H1 (cell line): ENCODE measurements at regions of chr15 and their contacts with region 1.

Region 1: GRCh38 chr15:74695597-74696397 is at the start of gene EDC3:
- DNase-seq: peak; percentile 33 to 95
- H3K4me3 ChIP-seq: peak within 1 kb of the TSS; percentile 82 to 97 (median 92)
- H3K27ac ChIP-seq: peak within 1 kb of the TSS; percentile 76
- H3K4me1 ChIP-seq: peaks cover 0 to 5% (median 3%) of the 10 kb centered on the region in 4 experiments; a peak in 4 of 7 replicates
- H3K27me3 ChIP-seq: no peaks in the 10 kb centered on the region; a peak in 3 of 7 replicates
- CTCF ChIP-seq: 0 out of 4 replicates have a peak, but pooled peaks of 1 of the 3 experiments have one; percentile 8
- EP300 ChIP-seq: 0 out of 3 replicates have a peak, but pooled peaks of 1 of the 2 experiments have one; percentile 20
- POLR2A ChIP-seq: peak in 1 of 2 experiments; percentile 85; a peak in 2 of 3 replicates
- RAD21 ChIP-seq: no peak
- total RNA-seq, gene EDC3: 49.1 and 50.8 TPM in 2 replicates

Region 2: GRCh38 chr15:74723754-74724334 is 28.0 kb after region 1 on chr15:
- CTCF ChIA-PET with region 1: interaction called, 3 read pairs
- POLR2A ChIA-PET with region 1: interaction called, 12 read pairs
- DNase-seq: peak in 1 of 2 experiments; percentile 49
- H3K4me3 ChIP-seq: no peak overlapping the region
- H3K27ac ChIP-seq: no peak overlapping the region
- H3K4me1 ChIP-seq: peaks cover 0 to 5% (median 0%) of the 10 kb centered on the region in 4 experiments; a peak in 3 of 7 replicates
- H3K27me3 ChIP-seq: peaks cover 11 to 31% (median 26%) of the 10 kb centered on the region in 4 experiments
- CTCF ChIP-seq: no peak
- EP300 ChIP-seq: no peak
- POLR2A ChIP-seq: no peak
- RAD21 ChIP-seq: no peak

Region 3: DNA sequence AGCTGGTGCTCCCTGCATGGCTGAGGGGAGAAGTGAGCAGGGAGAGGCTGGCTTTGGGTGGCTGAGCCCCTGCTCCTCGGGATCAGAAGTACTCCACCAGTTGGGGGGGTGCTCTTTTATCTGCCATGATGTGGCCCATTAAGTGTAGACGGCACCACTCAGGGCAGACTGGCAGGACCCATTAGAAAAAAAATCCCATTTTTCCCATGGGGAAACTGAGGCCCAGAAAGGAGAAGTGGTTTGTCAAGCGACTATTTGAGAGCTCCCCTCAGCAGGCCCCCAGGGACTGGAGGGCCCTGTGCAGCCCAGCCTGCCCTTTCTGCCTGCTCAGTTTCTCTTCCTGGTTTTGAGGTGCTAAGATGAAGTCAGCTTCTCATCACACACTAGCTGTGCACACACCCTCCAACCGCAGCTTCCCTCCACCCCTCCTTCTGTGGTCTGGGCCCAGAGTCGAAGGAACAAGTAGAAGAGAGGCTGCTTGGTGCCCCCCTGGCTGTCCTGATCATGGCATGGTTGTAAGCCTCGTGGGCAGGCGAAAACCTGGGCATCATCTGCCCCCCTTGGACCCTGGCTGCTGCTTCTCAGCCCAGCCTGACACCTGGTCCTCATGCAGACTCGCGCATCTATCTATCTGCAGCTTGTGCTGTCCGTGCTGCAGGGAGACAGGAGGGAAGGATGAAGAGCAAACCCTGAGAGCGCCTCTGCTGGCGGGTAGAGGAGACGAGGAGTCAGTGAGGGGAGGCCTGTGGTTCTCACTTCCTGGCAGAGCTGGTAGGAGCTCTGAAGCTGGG is 91.6 kb after region 1 on chr15:
- CTCF ChIA-PET with region 1: no interaction called
- POLR2A ChIA-PET with region 1: no interaction called
- DNase-seq: peak in 1 of 2 experiments; percentile 71
- H3K4me3 ChIP-seq: no peak overlapping the region
- H3K27ac ChIP-seq: no peak overlapping the region
- H3K4me1 ChIP-seq: peaks cover 4 to 34% (median 22%) of the 10 kb centered on the region in 4 experiments
- H3K27me3 ChIP-seq: no peaks in the 10 kb centered on the region
- CTCF ChIP-seq: peak; percentile 79 to 95 (median 88)
- EP300 ChIP-seq: no peak
- POLR2A ChIP-seq: no peak
- RAD21 ChIP-seq: peak; percentile 11 to 47; a peak in 2 of 4 replicates